ENCODE measurements at regions of chr4 and their contacts with region 1.

Region 1: GRCh38 chr4:140756319-140757231 is at the start of gene TBC1D9:
- DNase-seq: peak in 4 of 35 experiments; percentile 0 to 27 (median 0)
- ATAC-seq: peak in 3 of 4 experiments; percentile 19 to 39 (median 29)
- H3K4me3 ChIP-seq: peak within 1 kb of the TSS; percentile 15 to 82
- H3K4me3 Mint-ChIP-seq: peak within 1 kb of the TSS; percentile 41 to 54 (median 47)
- H3K27ac ChIP-seq: peak within 1 kb of the TSS; percentile 1
- H3K27ac Mint-ChIP-seq: peak within 1 kb of the TSS in 1 of 2 donors; percentile 55
- H3K4me1 ChIP-seq: peaks cover 3 to 10% of the 10 kb centered on the region in 2 experiments
- H3K4me1 Mint-ChIP-seq: peaks cover 0 to 15% (median 11%) of the 10 kb centered on the region in 3 donors
- H3K27me3 ChIP-seq: peaks cover 13 to 34% of the 10 kb centered on the region in 2 experiments
- H3K27me3 Mint-ChIP-seq: peaks cover 43 to 51% of the 10 kb centered on the region in 2 donors
- total RNA-seq, gene TBC1D9: 0.56 to 4.2 (median 1.2) TPM

Region 2: GRCh38 chr4:140641789-140642439 is 114.7 kb before region 1 on chr4:
- CTCF ChIA-PET with region 1: no interaction called
- POLR2A ChIA-PET with region 1: interaction called in 1 of 2 experiments, 13 read pairs
- DNase-seq: no peak
- ATAC-seq: no peak
- H3K4me3 ChIP-seq: no peak overlapping the region
- H3K4me3 Mint-ChIP-seq: no peak overlapping the region
- H3K27ac ChIP-seq: no peak overlapping the region
- H3K27ac Mint-ChIP-seq: no peak overlapping the region
- H3K4me1 ChIP-seq: no peaks in the 10 kb centered on the region
- H3K4me1 Mint-ChIP-seq: no peaks in the 10 kb centered on the region
- H3K27me3 ChIP-seq: peaks cover 0 to 12% of the 10 kb centered on the region in 2 experiments
- H3K27me3 Mint-ChIP-seq: peaks cover 21 to 23% of the 10 kb centered on the region in 2 donors

Region 3: GRCh38 chr4:141102367-141102766 is 345.8 kb after region 1 on chr4:
- CTCF ChIA-PET with region 1: interaction called in 1 of 2 experiments, 19 read pairs
- POLR2A ChIA-PET with region 1: no interaction called
- DNase-seq: no peak
- ATAC-seq: no peak
- H3K4me3 ChIP-seq: no peak overlapping the region
- H3K4me3 Mint-ChIP-seq: no peak overlapping the region
- H3K27ac ChIP-seq: no peak overlapping the region
- H3K27ac Mint-ChIP-seq: no peak overlapping the region
- H3K4me1 ChIP-seq: no peaks in the 10 kb centered on the region
- H3K4me1 Mint-ChIP-seq: no peaks in the 10 kb centered on the region
- H3K27me3 ChIP-seq: no peaks in the 10 kb centered on the region
- H3K27me3 Mint-ChIP-seq: peaks cover 2 to 5% of the 10 kb centered on the region in 2 donors

Region 4: DNA sequence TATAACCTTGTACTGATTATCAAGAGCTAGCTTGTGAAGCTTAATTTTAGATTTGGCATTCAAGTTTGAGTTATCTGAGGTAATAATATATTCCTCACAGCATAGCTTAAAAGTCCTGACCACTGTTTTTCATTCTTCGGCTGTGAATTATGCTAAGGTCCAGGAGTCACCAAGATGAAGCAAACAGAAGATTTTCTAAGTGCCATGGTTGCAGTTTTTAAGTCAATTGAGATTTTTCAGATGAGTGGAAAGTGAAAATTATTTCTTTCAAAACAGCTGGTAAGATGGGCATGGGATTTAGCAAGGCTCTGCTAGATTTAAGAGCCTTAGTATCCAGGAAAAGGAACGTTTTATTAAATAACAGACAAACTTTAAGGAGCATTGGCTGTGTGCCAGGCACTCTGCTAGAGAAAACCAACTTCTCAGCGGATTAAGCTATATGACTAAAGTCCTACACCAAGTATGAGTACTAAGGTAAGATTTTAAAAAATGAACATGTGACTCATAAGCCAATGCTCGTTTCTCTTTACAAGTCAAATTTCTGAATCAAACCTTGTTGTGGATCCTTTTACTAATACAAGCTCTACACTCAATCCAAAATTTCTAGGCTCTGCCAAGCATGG is 729.9 kb after region 1 on chr4:
- CTCF ChIA-PET with region 1: no interaction called
- POLR2A ChIA-PET with region 1: no interaction called
- DNase-seq: no peak
- ATAC-seq: no peak
- H3K4me3 ChIP-seq: no peak overlapping the region
- H3K4me3 Mint-ChIP-seq: no peak overlapping the region
- H3K27ac ChIP-seq: no peak overlapping the region
- H3K27ac Mint-ChIP-seq: no peak overlapping the region
- H3K4me1 ChIP-seq: no peaks in the 10 kb centered on the region
- H3K4me1 Mint-ChIP-seq: no peaks in the 10 kb centered on the region
- H3K27me3 ChIP-seq: no peaks in the 10 kb centered on the region
- H3K27me3 Mint-ChIP-seq: peaks cover 0 to 4% of the 10 kb centered on the region in 2 donors

Measured in T-cell (primary cell).